ENCODE measurements at regions of chr14 and their contacts with region 1.

Region 1: GRCh38 chr14:23068476-23069412 is 11.4 kb upstream of the CDH24 start:
- DNase-seq: peak; percentile 80
- H3K4me3 Mint-ChIP-seq: no peak overlapping the region
- H3K27ac Mint-ChIP-seq: peak overlapping the region; percentile 36
- H3K4me1 Mint-ChIP-seq: peaks cover 37% of the 10 kb centered on the region
- H3K27me3 Mint-ChIP-seq: no peaks in the 10 kb centered on the region

Region 2: DNA sequence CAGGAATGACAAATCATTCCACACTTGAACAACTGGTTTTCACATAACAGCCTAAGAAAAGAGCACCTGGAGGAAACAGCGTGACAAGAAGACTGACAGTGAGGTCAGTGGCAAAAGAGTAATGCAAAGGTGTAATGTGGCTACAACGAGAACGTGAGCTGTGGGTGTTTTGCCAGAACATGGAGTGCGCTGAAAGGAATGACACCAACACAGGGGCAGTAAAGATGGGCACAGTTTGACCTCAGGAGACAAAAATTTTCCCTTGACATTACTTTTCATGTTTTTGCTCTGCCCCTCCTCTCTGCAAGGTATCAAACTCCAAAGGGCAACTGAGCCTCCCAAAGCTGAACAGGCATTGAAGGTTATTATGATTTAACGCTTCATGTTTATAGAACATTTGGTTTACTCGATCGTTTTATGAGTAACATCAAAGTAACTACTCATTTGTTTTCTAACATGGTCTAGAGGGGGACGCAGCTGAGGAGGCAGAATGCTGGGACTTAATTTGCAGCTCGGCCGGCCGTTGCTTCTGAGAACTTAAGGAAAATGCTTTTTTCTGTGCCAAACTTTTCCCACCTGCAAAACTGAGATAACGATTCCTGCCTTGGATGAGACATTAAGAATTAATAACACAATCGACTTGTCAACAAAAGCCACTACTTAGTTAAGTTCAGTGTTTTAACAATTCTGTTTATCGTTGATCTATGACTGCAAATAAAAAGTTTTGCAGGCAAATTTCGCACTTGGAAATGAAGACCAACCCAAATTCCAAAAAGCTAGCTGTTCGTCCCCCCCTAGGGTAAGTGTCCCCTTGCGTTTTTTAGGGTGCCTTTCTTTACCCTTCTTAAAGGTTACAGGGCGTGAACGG is 112.8 kb before region 1 on chr14:
- CTCF ChIA-PET with region 1: interaction called, 18 read pairs
- POLR2A ChIA-PET with region 1: interaction called, 3 read pairs
- DNase-seq: no peak
- H3K4me3 Mint-ChIP-seq: peak overlapping the region; percentile 91
- H3K27ac Mint-ChIP-seq: peak overlapping the region; percentile 79
- H3K4me1 Mint-ChIP-seq: peaks cover 30% of the 10 kb centered on the region
- H3K27me3 Mint-ChIP-seq: peaks cover 3% of the 10 kb centered on the region

Region 3: DNA sequence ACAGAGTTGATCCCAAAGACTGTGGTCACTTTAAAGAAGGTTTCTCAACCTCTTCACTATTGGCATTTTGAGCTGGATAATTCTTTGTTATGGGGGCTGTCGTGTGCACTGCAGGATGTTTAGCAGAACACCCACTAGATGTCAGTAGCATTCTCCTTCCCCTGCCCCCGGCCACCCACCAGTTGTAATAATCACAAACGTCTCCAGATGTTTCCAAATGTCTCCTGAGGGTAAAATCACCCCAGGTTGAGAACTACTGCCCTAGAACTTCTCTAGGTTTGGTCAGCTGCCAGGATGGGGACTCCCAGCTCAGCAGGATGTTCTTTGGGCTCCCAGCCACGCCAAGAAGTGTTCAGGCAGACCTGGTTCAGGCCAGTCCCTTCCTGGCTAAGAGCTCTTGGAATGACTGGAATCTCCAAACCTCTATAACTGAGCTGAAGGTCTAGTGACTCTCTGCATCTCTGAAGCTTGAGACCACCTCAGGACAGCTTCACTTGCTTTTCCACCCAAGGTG is 73.9 kb before region 1 on chr14:
- CTCF ChIA-PET with region 1: interaction called, 332 read pairs
- POLR2A ChIA-PET with region 1: no interaction called
- DNase-seq: peak; percentile 29
- H3K4me3 Mint-ChIP-seq: no peak overlapping the region
- H3K27ac Mint-ChIP-seq: no peak overlapping the region
- H3K4me1 Mint-ChIP-seq: no peaks in the 10 kb centered on the region
- H3K27me3 Mint-ChIP-seq: no peaks in the 10 kb centered on the region

Region 4: DNA sequence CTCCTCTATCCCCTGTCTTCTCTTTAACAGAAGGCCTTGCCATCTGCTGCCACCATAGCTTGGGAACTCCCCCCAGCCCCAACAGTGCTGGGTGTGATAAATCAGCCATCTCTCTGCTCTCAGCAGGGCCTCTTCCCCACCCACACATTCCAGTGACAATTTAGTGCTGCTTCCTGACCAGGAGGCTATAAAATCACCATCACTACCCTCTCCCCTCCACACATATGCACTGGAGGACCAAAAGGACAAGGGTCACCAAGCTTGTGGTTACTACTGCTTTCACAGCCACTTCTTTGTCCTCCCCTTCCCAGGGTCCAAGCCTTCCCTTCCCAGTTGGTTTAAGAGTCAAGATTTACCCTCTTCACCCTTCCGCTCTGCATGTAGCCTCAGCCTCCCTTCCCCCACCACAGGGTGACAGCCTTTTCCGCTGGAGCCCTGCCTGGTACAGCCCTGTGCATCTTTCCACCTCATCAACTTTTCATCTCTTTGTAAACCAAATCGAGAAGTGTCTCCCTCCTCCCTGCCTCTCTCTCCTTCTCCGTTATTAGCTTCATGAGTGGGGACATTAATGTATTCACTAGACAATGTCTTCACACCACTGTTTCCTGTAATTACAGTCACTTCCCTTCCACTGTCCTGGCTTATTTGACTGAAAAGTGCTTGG is 43.5 kb before region 1 on chr14:
- CTCF ChIA-PET with region 1: interaction called, 11 read pairs
- POLR2A ChIA-PET with region 1: interaction called, 3 read pairs
- DNase-seq: no peak
- H3K4me3 Mint-ChIP-seq: no peak overlapping the region
- H3K27ac Mint-ChIP-seq: peak overlapping the region; percentile 52
- H3K4me1 Mint-ChIP-seq: peaks cover 38% of the 10 kb centered on the region
- H3K27me3 Mint-ChIP-seq: no peaks in the 10 kb centered on the region

Region 5: GRCh38 chr14:23085458-23085857 is 16.7 kb after region 1 on chr14:
- CTCF ChIA-PET with region 1: interaction called, 22 read pairs
- POLR2A ChIA-PET with region 1: interaction called, 8 read pairs
- DNase-seq: no peak
- H3K4me3 Mint-ChIP-seq: no peak overlapping the region
- H3K27ac Mint-ChIP-seq: no peak overlapping the region
- H3K4me1 Mint-ChIP-seq: peaks cover 19% of the 10 kb centered on the region
- H3K27me3 Mint-ChIP-seq: no peaks in the 10 kb centered on the region

Region 6: DNA sequence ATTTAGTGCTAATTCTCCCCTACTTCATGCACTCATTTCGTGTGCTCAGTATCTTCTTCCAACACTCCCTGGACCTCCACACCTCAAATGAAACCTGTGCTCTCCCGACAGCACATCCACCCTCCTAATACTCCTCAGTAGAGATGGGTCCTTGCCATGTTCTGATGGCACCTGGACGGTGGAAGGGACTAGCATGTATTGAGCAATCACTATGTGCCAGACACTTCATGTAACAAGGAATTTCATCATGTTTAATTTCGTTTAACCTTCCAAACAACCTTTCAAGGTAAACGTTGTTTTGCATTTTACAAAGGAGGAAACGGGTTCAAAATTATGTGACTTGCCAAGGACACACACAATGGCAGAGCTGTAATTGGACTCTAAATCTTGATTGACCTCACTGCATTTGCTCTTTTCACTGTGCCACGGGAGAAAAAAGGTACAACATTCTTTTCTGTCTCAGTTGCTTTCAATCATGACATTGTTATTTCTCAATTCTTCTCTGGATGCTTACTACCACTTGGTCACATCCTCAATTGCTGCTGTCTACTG is 126.9 kb after region 1 on chr14:
- CTCF ChIA-PET with region 1: no interaction called
- POLR2A ChIA-PET with region 1: no interaction called
- DNase-seq: no peak
- H3K4me3 Mint-ChIP-seq: no peak overlapping the region
- H3K27ac Mint-ChIP-seq: no peak overlapping the region
- H3K4me1 Mint-ChIP-seq: no peaks in the 10 kb centered on the region
- H3K27me3 Mint-ChIP-seq: peaks cover 11% of the 10 kb centered on the region